ENCODE measurements at regions of chr19 and their contacts with region 1.

Region 1: DNA sequence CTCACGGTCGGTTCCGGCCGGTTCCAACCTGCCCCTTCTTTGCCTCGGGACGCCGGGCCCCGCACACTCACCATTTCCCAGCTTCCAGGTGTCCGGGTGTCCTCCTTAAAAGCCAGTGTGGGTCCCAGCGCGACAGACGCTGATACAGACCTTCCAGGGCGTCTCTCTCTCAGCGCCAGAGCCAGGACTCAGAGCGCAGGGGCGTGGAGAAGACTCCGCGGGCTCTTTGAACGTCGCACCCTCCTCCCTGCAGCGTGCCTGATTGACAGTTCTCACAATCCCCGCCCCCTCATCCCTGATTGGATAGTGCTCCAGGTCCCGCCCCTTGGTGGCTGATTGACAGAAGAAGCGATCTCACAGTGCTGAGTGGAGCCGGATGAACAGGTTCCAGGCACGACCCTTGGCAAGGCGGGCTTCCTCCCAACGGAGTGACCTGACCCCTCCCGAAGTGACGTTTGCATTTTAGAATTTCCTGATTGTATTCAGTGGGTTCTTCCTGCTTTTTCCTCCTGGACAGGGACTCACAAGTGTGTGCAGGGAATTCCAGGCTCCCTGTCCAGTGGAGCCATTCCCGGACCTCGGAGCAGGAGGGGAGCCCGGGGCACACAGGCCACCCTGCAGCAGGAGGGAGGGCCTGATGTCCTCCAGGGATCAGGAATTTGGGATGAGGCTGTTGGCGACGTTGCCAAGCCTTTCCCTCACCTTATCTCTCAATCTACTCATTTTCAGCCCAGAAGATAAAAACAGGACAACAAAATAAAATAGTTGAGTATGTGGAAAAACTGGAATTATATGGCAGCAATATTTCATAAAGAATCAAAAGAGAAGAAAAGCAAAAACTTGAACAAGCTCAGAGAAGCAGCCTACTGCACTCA is at the start of gene ZNF823:
- DNase-seq: peak; percentile 92 to 99 (median 96)
- ATAC-seq: peak; percentile 99
- H3K4me3 ChIP-seq: peak within 1 kb of the TSS; percentile 87
- H3K4me3 Mint-ChIP-seq: peak within 1 kb of the TSS; percentile 96
- H3K27ac ChIP-seq: no peak within 1 kb of the TSS
- H3K27ac Mint-ChIP-seq: peak within 1 kb of the TSS; percentile 73
- H3K4me1 ChIP-seq: peaks cover 21% of the 10 kb centered on the region
- H3K4me1 Mint-ChIP-seq: peaks cover 22% of the 10 kb centered on the region
- H3K27me3 ChIP-seq: no peaks in the 10 kb centered on the region
- H3K27me3 Mint-ChIP-seq: no peaks in the 10 kb centered on the region
- CTCF ChIP-seq: no peak
- total RNA-seq, gene ZNF823: 1.7 to 2.2 TPM

Region 2: DNA sequence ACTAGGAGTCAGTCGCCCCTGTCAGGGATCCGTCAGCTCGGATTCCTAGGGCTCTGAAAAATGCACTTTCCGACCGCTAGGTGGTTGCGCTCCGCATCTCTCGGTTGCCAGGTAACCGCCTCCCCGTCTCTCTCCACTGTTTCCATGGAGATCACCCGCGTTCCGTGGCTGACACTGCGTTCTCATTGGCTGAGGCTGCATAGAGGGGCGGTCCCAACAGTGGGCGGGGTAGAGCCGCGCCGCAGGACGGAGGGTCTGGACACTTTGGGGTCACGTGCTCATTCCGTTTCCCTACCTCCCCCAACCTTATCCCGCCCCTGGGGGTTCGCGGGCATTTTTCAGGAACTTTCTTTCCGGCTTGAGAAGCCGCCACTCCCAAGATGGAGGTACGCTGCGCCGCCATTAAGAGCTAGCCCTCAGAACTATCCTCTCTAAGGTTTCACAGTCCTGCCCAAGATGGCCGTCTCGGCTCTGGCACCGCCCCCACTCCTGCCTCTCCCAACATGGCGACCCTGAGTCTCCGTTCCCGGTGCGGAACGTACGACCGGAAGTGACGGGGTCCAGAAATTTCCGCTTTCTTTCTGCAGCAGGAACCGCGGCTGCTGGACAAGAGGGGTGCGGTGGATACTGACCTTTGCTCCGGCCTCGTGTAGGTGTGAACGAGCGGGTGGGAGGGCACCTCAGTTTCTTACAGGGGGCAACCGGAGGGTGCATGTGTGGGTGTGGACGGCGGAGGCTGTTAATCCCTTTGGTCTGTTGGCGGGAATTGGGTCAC is 303.7 kb before region 1 on chr19 and contains the starts of genes ODAD3 and PRKCSH:
- CTCF ChIA-PET with region 1: no interaction called
- POLR2A ChIA-PET with region 1: no interaction called
- intact Hi-C with region 1: loop called in 1 of 2 experiments (anchors 5 kb)
- DNase-seq: peak; percentile 95 to 99 (median 97)
- ATAC-seq: peak; percentile 94
- H3K4me3 ChIP-seq: peak within 1 kb of the TSS; percentile 90
- H3K4me3 Mint-ChIP-seq: peak within 1 kb of the TSS; percentile 96
- H3K27ac ChIP-seq: peak within 1 kb of the TSS; percentile 58 to 83
- H3K27ac Mint-ChIP-seq: peak within 1 kb of the TSS; percentile 84
- H3K4me1 ChIP-seq: peaks cover 26% of the 10 kb centered on the region
- H3K4me1 Mint-ChIP-seq: peaks cover 21% of the 10 kb centered on the region
- H3K27me3 ChIP-seq: no peaks in the 10 kb centered on the region
- H3K27me3 Mint-ChIP-seq: no peaks in the 10 kb centered on the region
- CTCF ChIP-seq: peak; percentile 87
- total RNA-seq, gene ODAD3: not detected
- total RNA-seq, gene PRKCSH: 257 to 260 TPM

Region 3: DNA sequence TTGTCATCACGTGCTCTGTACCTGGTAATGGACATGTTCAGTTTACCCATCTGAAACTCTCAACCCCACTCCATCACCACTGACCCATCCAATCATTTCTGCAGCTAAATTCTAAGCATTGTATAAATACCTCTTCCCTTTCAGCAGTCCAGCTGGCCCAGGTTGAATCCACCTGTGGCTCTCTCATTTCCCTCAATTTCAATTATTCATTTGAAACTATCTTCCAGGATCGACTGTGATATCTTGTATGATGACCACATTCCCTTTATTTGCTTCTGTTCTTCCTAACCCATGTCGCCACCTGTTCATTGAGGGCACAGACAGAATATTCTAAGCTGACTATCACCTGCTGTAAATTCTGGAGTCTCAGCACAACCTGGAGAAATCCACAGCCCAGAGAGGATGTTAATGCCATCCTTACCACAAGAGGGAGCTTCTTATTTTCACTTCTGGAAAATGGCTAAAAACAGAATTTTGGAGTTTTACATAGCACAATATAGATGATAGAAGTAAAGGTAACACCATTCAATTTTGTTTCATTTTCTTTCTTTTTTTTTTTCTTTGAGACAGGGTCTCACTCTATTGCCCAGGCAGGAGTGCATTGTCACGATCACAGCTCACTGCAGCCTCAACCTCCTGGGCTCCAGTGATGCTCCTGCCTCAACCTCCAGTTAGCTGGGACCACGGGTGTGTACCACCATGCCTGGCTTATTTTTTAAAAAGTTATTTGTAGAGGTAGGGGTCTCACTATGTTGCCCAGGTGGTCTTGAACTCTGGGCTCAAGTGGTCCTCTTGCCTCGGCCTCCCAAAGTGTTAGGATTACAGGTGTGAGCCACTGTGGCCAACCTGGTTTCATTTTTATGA is 38.8 kb before region 1 on chr19:
- CTCF ChIA-PET with region 1: interaction called, 5 read pairs
- POLR2A ChIA-PET with region 1: no interaction called
- intact Hi-C with region 1: loop called in 1 of 2 experiments (anchors 5 kb)
- DNase-seq: peak in 3 of 14 experiments; percentile 32 to 53 (median 51)
- ATAC-seq: peak; percentile 17
- H3K4me3 ChIP-seq: no peak overlapping the region
- H3K4me3 Mint-ChIP-seq: no peak overlapping the region
- H3K27ac ChIP-seq: no peak overlapping the region
- H3K27ac Mint-ChIP-seq: no peak overlapping the region
- H3K4me1 ChIP-seq: peaks cover 1% of the 10 kb centered on the region
- H3K4me1 Mint-ChIP-seq: peaks cover under 1% of the 10 kb centered on the region
- H3K27me3 ChIP-seq: peaks cover 3 to 7% of the 10 kb centered on the region in 2 experiments
- H3K27me3 Mint-ChIP-seq: peaks cover 16% of the 10 kb centered on the region
- CTCF ChIP-seq: peak; percentile 67

Region 4: GRCh38 chr19:11767633-11768133 is 28.7 kb after region 1 on chr19:
- CTCF ChIA-PET with region 1: interaction called, 3 read pairs
- POLR2A ChIA-PET with region 1: interaction called, 9 read pairs
- intact Hi-C with region 1: loop called in 1 of 2 experiments (anchors 1 kb)
- DNase-seq: peak in 10 of 14 experiments; percentile 0 to 34 (median 18)
- ATAC-seq: no peak
- H3K4me3 ChIP-seq: peak overlapping the region; percentile 70
- H3K4me3 Mint-ChIP-seq: peak overlapping the region; percentile 98
- H3K27ac ChIP-seq: peak overlapping the region; percentile 13 to 23
- H3K27ac Mint-ChIP-seq: peak overlapping the region; percentile 88
- H3K4me1 ChIP-seq: peaks cover 23% of the 10 kb centered on the region
- H3K4me1 Mint-ChIP-seq: peaks cover 23% of the 10 kb centered on the region
- H3K27me3 ChIP-seq: no peaks in the 10 kb centered on the region
- H3K27me3 Mint-ChIP-seq: peaks cover 8% of the 10 kb centered on the region
- CTCF ChIP-seq: no peak

Region 5: DNA sequence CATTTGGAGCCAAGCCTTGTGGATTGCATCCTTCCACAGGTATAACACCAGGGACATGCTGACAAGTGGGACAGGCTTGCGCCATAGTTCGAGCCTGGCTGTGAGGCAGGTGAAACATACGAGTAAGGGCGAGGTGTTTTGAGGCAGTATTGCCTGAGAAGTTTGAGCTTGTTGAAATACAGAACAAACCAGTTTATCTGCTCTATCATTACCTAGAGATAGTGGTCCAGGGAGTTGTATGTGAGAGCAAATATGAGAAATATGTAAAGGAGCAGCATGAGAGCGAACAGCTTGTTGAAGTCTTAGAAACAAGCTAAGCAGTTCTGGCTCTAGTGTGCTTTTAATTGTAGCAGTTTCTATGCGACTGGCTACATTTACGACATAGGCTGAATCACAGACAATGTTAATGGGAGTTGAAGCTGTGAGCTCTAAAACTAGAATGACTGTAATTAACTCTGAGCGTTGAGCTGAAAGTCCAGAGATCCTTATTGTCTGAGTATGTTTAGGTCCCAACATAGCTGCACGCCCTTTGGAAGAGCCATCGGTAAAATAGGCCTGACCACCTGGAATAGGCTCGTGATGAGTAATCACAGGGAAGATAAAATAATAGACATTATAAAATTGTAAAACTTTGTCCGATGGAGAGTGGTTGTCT is 117.7 kb after region 1 on chr19:
- CTCF ChIA-PET with region 1: no interaction called
- POLR2A ChIA-PET with region 1: no interaction called
- intact Hi-C with region 1: no loop called
- DNase-seq: no peak
- ATAC-seq: no peak
- H3K4me3 ChIP-seq: no peak overlapping the region
- H3K4me3 Mint-ChIP-seq: no peak overlapping the region
- H3K27ac ChIP-seq: no peak overlapping the region
- H3K27ac Mint-ChIP-seq: no peak overlapping the region
- H3K4me1 ChIP-seq: no peaks in the 10 kb centered on the region
- H3K4me1 Mint-ChIP-seq: peaks cover 4% of the 10 kb centered on the region
- H3K27me3 ChIP-seq: no peaks in the 10 kb centered on the region
- H3K27me3 Mint-ChIP-seq: no peaks in the 10 kb centered on the region
- CTCF ChIP-seq: no peak

Region 6: DNA sequence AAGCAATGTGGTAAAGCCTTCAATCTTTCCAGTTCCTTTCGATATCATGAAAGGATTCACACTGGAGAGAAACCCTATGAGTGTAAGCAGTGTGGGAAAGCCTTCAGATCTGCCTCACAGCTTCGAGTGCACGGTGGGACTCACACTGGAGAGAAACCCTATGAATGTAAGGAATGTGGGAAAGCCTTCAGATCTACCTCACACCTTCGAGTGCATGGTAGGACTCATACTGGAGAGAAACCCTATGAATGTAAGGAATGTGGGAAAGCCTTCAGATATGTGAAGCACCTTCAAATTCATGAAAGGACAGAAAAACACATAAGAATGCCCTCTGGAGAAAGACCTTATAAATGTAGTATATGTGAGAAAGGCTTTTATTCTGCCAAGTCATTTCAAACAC is 210.2 kb after region 1 on chr19:
- CTCF ChIA-PET with region 1: no interaction called
- POLR2A ChIA-PET with region 1: no interaction called
- intact Hi-C with region 1: no loop called
- DNase-seq: no peak
- ATAC-seq: no peak
- H3K4me3 ChIP-seq: no peak overlapping the region
- H3K4me3 Mint-ChIP-seq: no peak overlapping the region
- H3K27ac ChIP-seq: no peak overlapping the region
- H3K27ac Mint-ChIP-seq: no peak overlapping the region
- H3K4me1 ChIP-seq: no peaks in the 10 kb centered on the region
- H3K4me1 Mint-ChIP-seq: no peaks in the 10 kb centered on the region
- H3K27me3 ChIP-seq: no peaks in the 10 kb centered on the region
- H3K27me3 Mint-ChIP-seq: no peaks in the 10 kb centered on the region
- CTCF ChIP-seq: no peak

Measured in CD4-positive, alpha-beta T cell (primary cell).